B cell (primary cell): ENCODE measurements at regions of chr12 and their contacts with region 1.

Region 1: GRCh38 chr12:101876861-101877815 is at the start of gene DRAM1:
- DNase-seq: peak; percentile 90
- ATAC-seq: peak; percentile 87
- H3K4me3 ChIP-seq: peak within 1 kb of the TSS; percentile 80 to 92 (median 86)
- H3K4me3 Mint-ChIP-seq: peak within 1 kb of the TSS; percentile 90
- H3K27ac ChIP-seq: peak within 1 kb of the TSS; percentile 84 to 85
- H3K27ac Mint-ChIP-seq: peak within 1 kb of the TSS; percentile 88
- H3K4me1 ChIP-seq: peaks cover 6 to 14% of the 10 kb centered on the region in 2 donors
- H3K4me1 Mint-ChIP-seq: peaks cover 20% of the 10 kb centered on the region
- H3K27me3 ChIP-seq: no peaks in the 10 kb centered on the region
- H3K27me3 Mint-ChIP-seq: no peaks in the 10 kb centered on the region
- CTCF ChIP-seq: peak; percentile 25
- total RNA-seq, gene DRAM1: 7.9 and 10.2 TPM in 2 replicates

Region 2: GRCh38 chr12:101407436-101408345 is 469.4 kb before region 1 on chr12 and contains the start of gene ARL1:
- CTCF ChIA-PET with region 1: no interaction called
- POLR2A ChIA-PET with region 1: no interaction called
- intact Hi-C with region 1: loop called (anchors 2 kb)
- DNase-seq: peak; percentile 92
- ATAC-seq: peak; percentile 86
- H3K4me3 ChIP-seq: peak within 1 kb of the TSS; percentile 80 to 95 (median 93)
- H3K4me3 Mint-ChIP-seq: peak within 1 kb of the TSS; percentile 99
- H3K27ac ChIP-seq: peak within 1 kb of the TSS; percentile 91 to 96
- H3K27ac Mint-ChIP-seq: peak within 1 kb of the TSS; percentile 97
- H3K4me1 ChIP-seq: peaks cover 9 to 12% of the 10 kb centered on the region in 2 donors
- H3K4me1 Mint-ChIP-seq: peaks cover 28% of the 10 kb centered on the region
- H3K27me3 ChIP-seq: no peaks in the 10 kb centered on the region
- H3K27me3 Mint-ChIP-seq: peaks cover 5% of the 10 kb centered on the region
- CTCF ChIP-seq: no peak
- total RNA-seq, gene ARL1: 40.7 and 51.2 TPM in 2 replicates

Region 3: GRCh38 chr12:101909646-101910045 is 32.5 kb after region 1 on chr12:
- CTCF ChIA-PET with region 1: interaction called, 3 read pairs
- POLR2A ChIA-PET with region 1: interaction called, 11 read pairs
- intact Hi-C with region 1: no loop called
- DNase-seq: peak; percentile 19
- ATAC-seq: peak; percentile 33
- H3K4me3 ChIP-seq: peak overlapping the region in 4 of 5 experiments; percentile 2 to 55 (median 48)
- H3K4me3 Mint-ChIP-seq: peak overlapping the region; percentile 79
- H3K27ac ChIP-seq: peak overlapping the region; percentile 42 to 61
- H3K27ac Mint-ChIP-seq: peak overlapping the region; percentile 61
- H3K4me1 ChIP-seq: peaks cover 9 to 20% of the 10 kb centered on the region in 2 donors
- H3K4me1 Mint-ChIP-seq: peaks cover 35% of the 10 kb centered on the region
- H3K27me3 ChIP-seq: no peaks in the 10 kb centered on the region
- H3K27me3 Mint-ChIP-seq: no peaks in the 10 kb centered on the region
- CTCF ChIP-seq: no peak

Region 4: DNA sequence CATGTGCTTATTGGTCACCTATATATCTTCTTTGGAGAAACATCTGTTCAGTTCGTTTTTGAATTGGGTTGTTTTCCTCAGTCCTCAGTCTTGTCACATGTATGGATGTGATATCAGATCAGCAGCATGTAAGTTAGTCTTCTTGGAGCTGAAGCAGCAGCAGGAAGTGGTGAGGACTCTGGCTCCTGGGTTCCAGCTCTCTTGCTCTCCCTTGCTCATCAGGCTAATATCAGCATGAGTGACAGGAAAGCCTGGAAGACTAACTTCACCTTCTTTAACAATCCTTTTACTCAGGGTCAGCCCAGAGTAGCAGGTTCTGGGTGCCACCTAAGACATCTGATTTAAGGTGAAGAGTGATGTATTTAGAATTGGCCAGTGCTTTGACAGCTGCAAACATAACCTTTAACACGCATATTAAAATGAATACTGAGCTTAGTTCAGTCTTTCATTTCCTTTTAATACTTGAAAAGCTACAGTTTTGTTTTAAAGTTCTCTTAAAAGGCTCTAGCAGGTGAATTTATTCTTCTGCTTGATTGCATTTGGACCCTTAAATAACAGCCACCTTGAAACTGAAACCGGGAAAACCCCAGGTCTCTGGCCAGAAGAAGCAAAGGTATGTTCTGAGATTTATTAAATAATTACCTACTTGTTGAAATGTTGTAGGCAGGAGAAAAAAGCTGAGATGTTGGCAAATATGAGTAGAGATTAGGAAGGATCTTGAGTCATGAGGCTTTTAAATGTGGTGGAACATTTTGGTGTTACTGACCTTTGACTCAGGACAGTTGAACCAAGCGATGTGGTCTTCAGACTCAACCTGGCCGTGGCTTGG is 54.6 kb after region 1 on chr12:
- CTCF ChIA-PET with region 1: no interaction called
- POLR2A ChIA-PET with region 1: no interaction called
- intact Hi-C with region 1: loop called (anchors 5 kb)
- DNase-seq: peak; percentile 83
- ATAC-seq: peak; percentile 68
- H3K4me3 ChIP-seq: peak overlapping the region in 3 of 5 experiments; percentile 3 to 41 (median 25)
- H3K4me3 Mint-ChIP-seq: peak overlapping the region; percentile 33
- H3K27ac ChIP-seq: peak overlapping the region; percentile 81 to 93
- H3K27ac Mint-ChIP-seq: peak overlapping the region; percentile 88
- H3K4me1 ChIP-seq: peaks cover 76 to 79% of the 10 kb centered on the region in 2 donors
- H3K4me1 Mint-ChIP-seq: peaks cover 79% of the 10 kb centered on the region
- H3K27me3 ChIP-seq: no peaks in the 10 kb centered on the region
- H3K27me3 Mint-ChIP-seq: no peaks in the 10 kb centered on the region
- CTCF ChIP-seq: no peak